K562 (cell line): ENCODE measurements at regions of chr20 and their contacts with region 1.

Region 1: DNA sequence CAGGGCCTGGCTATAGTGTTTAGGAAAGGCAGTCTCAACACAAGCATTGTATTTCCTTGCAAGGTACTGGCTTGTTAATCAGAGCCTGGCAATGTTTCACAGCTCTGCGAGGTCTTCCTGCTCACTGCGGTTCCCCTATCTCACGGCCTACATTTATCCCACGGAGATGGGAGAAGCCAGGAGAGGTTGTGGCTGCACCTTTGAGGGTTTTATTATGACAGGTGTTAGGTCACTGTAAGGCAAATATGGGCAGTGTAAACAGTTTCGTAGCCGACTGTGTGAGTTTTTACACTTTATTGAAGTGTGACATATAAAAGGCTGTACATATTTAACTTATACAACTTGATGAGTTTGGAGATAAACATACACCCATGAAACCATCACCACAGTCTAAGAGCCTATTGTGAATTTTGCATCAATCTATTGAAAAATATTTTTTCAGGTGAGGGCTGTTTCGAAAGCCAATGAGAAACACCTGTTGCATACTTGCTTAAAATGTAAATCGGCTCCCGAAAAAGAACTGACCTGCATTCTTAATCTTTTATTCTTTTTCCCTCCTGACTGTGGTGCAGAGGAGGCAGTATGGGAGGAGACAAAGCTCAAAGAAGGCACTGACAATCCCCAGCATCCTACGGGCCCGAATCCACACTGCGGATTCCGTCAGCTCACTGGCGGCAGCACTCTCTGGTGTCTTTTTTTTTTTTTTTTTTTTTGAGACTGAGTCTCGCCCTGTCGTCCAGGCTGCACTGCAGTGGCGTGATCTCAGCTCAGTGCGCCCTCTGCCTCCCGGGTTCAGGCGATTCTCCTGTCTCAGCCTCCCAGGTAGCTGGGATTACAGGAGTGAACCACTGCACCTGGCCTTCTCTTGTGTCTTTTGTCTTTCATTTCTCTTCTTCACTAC is 7.5 kb upstream of the RBM38 start:
- DNase-seq: no peak
- ATAC-seq: no peak
- H3K4me3 ChIP-seq: no peak overlapping the region
- H3K27ac ChIP-seq: no peak overlapping the region
- H3K4me1 ChIP-seq: peaks cover 2 to 16% of the 10 kb centered on the region in 2 experiments; a peak in 4 of 5 replicates
- H3K27me3 ChIP-seq: no peaks in the 10 kb centered on the region
- CTCF ChIP-seq: no peak
- EP300 ChIP-seq: no peak
- POLR2A ChIP-seq: no peak
- RAD21 ChIP-seq: no peak

Region 2: DNA sequence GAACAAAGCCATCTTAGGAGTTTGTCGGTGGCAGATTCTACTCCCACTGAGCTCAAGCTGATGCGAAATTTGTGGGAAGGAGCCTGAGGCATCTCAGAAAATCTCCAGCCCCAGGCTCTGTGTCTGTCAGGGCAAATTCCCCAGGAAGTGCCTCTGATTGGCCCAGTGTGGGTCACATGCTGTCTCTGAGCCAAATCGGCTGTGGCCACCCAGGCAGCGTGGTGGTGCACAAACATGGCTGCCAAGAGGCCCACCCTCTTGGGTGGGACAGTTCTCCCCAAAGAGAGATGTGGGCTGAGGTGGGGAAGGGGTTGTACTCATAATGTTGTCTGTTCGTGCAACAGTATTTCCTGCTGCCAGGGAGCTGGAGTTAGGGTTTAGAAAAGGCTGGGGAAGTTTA is 247.8 kb before region 1 on chr20:
- CTCF ChIA-PET with region 1: no interaction called
- POLR2A ChIA-PET with region 1: no interaction called
- in situ Hi-C with region 1: no loop called
- intact Hi-C with region 1: no loop called
- DNase-seq: peak; percentile 3 to 26 (median 21)
- ATAC-seq: peak; percentile 76
- H3K4me3 ChIP-seq: no peak overlapping the region
- H3K27ac ChIP-seq: no peak overlapping the region
- H3K4me1 ChIP-seq: no peaks in the 10 kb centered on the region; a peak in 1 of 5 replicates
- H3K27me3 ChIP-seq: peaks cover 44 to 54% of the 10 kb centered on the region in 2 experiments
- CTCF ChIP-seq: no peak
- EP300 ChIP-seq: no peak
- POLR2A ChIP-seq: no peak
- RAD21 ChIP-seq: no peak

Region 3: DNA sequence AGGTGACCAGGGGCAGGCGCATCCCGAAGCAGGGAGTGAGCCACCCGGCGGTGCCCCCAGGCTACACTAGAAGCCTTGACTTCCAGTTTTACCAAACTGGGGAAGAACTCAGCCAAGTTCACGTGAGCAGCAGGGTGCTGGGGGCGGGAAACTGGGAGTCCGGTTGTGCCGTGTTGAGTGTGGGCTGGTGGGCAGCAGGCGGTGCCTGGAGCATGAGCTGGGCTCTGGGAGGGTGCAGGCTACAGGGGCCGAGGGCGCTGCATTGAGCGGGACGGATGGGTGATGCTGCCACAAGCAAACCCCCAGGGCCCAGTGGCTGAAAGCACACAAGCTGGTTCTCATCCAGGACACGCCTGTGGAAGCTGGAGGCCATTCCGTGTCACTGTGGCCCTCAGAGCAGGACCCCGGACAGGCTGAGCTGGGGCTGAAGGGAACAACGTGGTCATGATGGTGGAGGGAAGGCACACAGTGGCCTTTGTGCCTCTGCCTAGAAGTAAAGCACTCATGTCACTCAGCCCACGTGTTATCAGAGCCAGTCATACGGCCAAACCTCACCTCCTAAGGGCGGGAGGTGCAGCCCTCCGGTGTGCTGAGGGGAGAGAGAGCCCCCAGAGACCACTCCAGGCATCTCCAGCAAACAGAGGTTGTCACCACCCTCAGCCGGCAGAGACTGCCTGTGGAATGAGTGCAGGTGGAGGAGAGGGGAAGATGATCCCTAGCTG is 37.0 kb after region 1 on chr20:
- CTCF ChIA-PET with region 1: no interaction called
- POLR2A ChIA-PET with region 1: no interaction called
- in situ Hi-C with region 1: no loop called
- intact Hi-C with region 1: loop called (anchors 5 kb)
- DNase-seq: peak; percentile 58 to 74 (median 66)
- ATAC-seq: peak; percentile 76
- H3K4me3 ChIP-seq: no peak overlapping the region
- H3K27ac ChIP-seq: no peak overlapping the region; the same call in 2 of the 3 replicates
- H3K4me1 ChIP-seq: peaks cover 34 to 44% of the 10 kb centered on the region in 2 experiments
- H3K27me3 ChIP-seq: no peaks in the 10 kb centered on the region
- CTCF ChIP-seq: no peak
- EP300 ChIP-seq: no peak
- POLR2A ChIP-seq: no peak
- RAD21 ChIP-seq: no peak

Region 4: DNA sequence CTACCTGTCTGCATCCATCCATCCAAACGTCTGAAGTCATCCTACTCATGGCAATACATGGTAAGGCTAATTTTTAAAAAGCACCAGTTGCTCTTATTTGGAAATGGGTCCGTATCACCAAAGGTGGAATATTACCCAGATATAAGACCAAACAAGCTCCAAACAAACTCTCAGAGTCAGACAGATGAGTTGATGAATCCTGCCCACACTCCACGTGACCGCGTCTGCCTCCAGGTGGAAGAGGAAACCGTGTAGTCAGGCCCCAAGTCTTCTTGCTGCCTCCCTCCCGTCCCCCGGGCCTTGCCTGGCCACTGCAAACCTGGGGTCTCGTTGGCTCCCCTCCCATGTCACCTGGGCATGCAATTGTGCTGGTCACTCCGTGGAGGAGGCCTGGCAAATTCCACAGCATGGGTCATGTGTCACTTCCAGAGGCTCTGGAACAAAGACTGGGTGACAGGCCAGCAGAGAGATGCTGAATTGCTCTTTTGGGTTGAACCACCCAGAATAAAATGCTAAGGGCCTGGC is 109.5 kb after region 1 on chr20:
- CTCF ChIA-PET with region 1: interaction called, 77 read pairs
- POLR2A ChIA-PET with region 1: interaction called, 6 read pairs
- in situ Hi-C with region 1: loop called (anchors 5 kb)
- intact Hi-C with region 1: loop called (anchors 1 kb)
- DNase-seq: no peak
- ATAC-seq: no peak
- H3K4me3 ChIP-seq: no peak overlapping the region
- H3K27ac ChIP-seq: no peak overlapping the region
- H3K4me1 ChIP-seq: peaks cover 3 to 4% of the 10 kb centered on the region in 2 experiments; a peak in 1 of 5 replicates
- H3K27me3 ChIP-seq: no peaks in the 10 kb centered on the region
- CTCF ChIP-seq: no peak
- EP300 ChIP-seq: no peak
- POLR2A ChIP-seq: no peak
- RAD21 ChIP-seq: no peak

Region 5: DNA sequence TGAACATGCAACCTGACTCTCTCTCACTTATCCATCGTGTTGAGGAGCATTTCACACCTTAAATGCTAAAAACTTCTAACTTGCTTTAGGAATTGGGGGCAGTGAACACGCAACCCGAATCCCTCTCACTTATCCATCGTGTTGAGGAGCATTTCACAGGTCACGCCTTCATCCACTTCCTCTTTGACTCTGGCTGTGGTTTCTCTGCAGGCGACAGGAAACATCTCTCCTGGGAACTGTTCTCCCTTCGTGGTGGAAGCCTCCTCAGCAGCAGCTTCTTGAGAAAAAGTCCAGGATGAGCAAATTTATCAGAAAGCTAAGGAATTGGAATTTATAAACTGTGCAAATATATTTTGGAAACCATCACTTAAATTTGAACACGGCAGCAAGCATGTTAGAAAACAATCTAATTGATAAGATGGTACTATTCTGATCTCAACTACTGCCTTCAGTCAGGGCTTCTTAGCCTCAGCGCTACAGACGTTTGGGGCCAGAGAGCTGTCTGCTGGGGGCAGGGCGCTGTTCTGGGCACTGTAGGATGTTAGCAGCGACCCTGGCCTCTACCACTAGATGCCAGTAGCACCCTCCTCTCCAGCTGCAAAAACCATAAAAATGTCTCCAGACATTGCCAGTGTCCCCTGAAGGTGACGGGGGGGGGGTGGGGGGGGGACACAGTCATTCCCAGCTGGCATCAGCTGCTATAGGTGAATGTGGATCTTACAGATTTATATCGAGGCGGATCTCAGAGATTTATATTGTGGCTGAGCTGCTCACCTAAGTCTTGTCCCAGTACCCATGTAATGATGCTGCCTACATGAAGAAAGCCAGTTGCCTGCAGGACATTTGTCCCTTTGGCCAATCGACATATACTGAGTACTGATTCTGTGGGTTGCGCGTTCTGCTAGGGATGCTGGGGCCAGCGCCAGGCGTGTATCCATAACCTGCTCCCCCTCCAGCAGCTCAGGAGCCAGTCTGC is 115.0 kb after region 1 on chr20:
- CTCF ChIA-PET with region 1: interaction called, 77 read pairs
- POLR2A ChIA-PET with region 1: interaction called, 6 read pairs
- in situ Hi-C with region 1: loop called (anchors 5 kb)
- intact Hi-C with region 1: loop called (anchors 1 kb)
- DNase-seq: no peak
- ATAC-seq: peak; percentile 32; the same call in 2 of the 3 replicates
- H3K4me3 ChIP-seq: no peak overlapping the region
- H3K27ac ChIP-seq: no peak overlapping the region
- H3K4me1 ChIP-seq: peaks cover 3% of the 10 kb centered on the region in 2 experiments; a peak in 2 of 5 replicates
- H3K27me3 ChIP-seq: no peaks in the 10 kb centered on the region
- CTCF ChIP-seq: peak in 2 of 3 experiments; percentile 23 to 25; a peak in 3 of 6 replicates
- EP300 ChIP-seq: no peak
- POLR2A ChIP-seq: no peak
- RAD21 ChIP-seq: 0 out of 4 replicates have a peak, but pooled peaks of 1 of the 2 experiments have one; percentile 2